Activated CD4-positive, alpha-beta T cell treated with anti-CD3 and anti-CD28 coated beads, Interleukin-2, amount 10 ng/mL, durations not matched to agents 24 days and 14 days (primary cell): ENCODE measurements at regions of chr20 and their contacts with region 1.

Region 1: GRCh38 chr20:34704177-34705007 is at the start of gene TP53INP2:
- DNase-seq: peak; percentile 96
- H3K4me3 Mint-ChIP-seq: peak within 1 kb of the TSS; percentile 88
- H3K27ac Mint-ChIP-seq: peak within 1 kb of the TSS; percentile 90
- H3K4me1 Mint-ChIP-seq: peaks cover 29% of the 10 kb centered on the region
- H3K27me3 Mint-ChIP-seq: peaks cover 16% of the 10 kb centered on the region
- total RNA-seq, gene TP53INP2: 2.3 and 2.7 TPM in 2 replicates

Region 2: DNA sequence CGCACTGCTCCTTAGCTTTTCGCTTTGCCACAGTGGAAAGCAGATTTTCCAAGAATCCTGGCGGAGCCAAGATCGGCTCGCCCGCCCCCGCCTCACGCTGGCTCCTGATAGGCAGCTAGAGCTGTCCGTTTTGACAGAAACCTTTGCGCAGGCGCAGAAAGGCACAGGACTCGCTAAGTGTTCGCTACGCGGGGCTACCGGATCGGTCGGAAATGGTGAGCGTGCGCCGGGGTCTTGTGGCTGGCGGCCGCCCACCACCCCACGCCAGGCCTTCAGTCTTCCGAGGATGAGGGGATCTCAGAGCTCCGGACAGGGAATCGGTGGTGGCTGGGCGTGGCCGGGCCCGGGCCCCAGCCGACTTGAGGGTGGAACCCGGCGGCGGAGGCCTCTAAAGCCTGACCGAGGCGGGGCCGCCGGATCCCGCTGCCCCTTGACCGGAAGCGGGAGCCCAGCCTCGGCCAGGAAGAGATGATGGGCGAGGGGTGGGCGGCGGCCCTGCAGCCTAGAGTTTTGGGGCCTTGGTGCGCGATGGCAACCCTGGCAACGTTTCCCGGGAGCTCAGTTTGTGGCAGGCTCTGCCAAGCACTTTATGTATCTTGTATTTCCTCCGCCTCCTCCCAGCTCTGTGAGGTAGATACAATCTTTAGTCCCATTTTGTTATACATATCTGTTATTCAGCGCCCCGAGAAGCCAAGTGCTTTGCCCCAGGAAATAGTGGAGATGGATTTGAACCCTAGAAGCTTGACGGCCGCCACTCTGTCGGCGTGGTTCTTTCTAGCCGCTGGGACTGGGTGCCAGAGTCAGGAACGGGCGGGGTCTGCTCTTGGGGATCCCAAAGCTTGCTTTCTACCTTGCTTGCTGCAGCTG is 187.9 kb before region 1 on chr20 and contains the start of gene DYNLRB1:
- intact Hi-C with region 1: loop called (anchors 2 kb)
- DNase-seq: peak; percentile 99
- H3K4me3 Mint-ChIP-seq: peak within 1 kb of the TSS; percentile 92
- H3K27ac Mint-ChIP-seq: peak within 1 kb of the TSS; percentile 98
- H3K4me1 Mint-ChIP-seq: peaks cover 24% of the 10 kb centered on the region
- H3K27me3 Mint-ChIP-seq: no peaks in the 10 kb centered on the region
- total RNA-seq, gene DYNLRB1: 96.5 and 98.9 TPM in 2 replicates

Region 3: GRCh38 chr20:34558320-34559218 is 145.8 kb before region 1 on chr20 and contains the start of gene MAP1LC3A:
- intact Hi-C with region 1: loop called (anchors 2 kb)
- DNase-seq: peak; percentile 98
- H3K4me3 Mint-ChIP-seq: peak within 1 kb of the TSS; percentile 89
- H3K27ac Mint-ChIP-seq: peak within 1 kb of the TSS; percentile 90
- H3K4me1 Mint-ChIP-seq: peaks cover 7% of the 10 kb centered on the region
- H3K27me3 Mint-ChIP-seq: no peaks in the 10 kb centered on the region
- total RNA-seq, gene MAP1LC3A: 3.1 and 3.6 TPM in 2 replicates

Region 4: GRCh38 chr20:34676642-34677373 is 27.6 kb before region 1 on chr20 and contains the start of gene PIGU:
- intact Hi-C with region 1: loop called (anchors 1 kb)
- DNase-seq: peak; percentile 99
- H3K4me3 Mint-ChIP-seq: peak within 1 kb of the TSS; percentile 92
- H3K27ac Mint-ChIP-seq: peak within 1 kb of the TSS; percentile 98
- H3K4me1 Mint-ChIP-seq: peaks cover 25% of the 10 kb centered on the region
- H3K27me3 Mint-ChIP-seq: no peaks in the 10 kb centered on the region
- total RNA-seq, gene PIGU: 26.4 and 27.1 TPM in 2 replicates

Region 5: DNA sequence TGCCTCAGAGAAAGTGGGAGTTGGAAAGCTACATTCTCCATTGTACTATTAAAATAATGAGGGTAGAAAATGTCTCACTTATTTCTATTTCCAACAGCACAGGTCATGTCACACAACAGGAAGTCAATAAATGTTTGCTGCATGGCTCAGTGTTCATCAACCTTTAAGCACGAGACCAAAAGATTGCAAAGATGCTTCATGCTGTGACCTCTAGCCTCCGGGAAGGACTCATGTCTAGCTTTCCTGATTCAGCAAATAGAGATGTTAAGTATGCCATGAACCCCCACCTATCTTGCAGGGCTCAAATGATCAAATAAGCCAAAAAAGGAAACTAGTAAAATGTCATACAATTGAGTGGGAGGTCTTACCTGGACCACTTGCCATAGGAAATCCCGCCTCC is 63.7 kb after region 1 on chr20:
- intact Hi-C with region 1: loop called (anchors 5 kb)
- DNase-seq: no peak
- H3K4me3 Mint-ChIP-seq: no peak overlapping the region
- H3K27ac Mint-ChIP-seq: no peak overlapping the region
- H3K4me1 Mint-ChIP-seq: no peaks in the 10 kb centered on the region
- H3K27me3 Mint-ChIP-seq: no peaks in the 10 kb centered on the region